ENCODE measurements at regions of chr12 and their contacts with region 1.

Region 1: DNA sequence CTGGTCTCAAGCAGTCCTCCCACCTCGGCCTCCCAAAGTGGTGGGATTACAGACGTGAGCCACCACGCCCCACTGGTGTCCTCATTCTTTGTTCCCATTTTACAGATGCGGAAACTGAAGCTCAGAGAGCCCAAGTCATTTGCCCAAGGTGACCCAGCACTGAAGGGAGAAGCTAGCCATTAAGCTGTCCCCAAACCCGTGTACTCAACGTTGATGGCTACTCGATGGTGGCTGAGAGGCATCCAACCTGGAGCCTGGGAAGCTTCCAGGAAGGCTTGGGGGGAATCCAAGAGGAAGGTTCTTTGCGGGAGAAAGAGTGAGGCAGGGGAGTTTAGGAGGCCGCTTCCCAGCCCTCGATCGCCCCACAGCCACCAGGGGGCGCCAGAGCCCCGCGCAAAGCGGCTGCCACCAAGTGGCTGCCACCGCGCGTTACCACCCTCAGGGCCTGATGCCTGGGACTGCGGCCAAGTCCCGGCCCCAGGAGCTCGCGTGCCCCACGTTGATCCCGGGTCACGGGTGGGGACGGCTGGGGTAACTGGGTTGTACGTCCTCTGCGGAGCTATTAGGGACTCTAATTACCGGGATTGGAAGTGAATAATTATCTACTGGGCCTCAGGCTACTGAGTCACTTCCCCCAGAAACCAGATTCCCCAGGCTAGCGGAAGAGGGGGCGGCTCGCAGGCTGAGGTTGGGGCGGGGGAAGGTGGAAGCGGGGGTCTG is 8.8 kb upstream of the SH2B3 start:
- DNase-seq: peak; percentile 76 to 95 (median 86)
- ATAC-seq: peak; percentile 86
- H3K4me3 ChIP-seq: no peak overlapping the region
- H3K4me3 Mint-ChIP-seq: peak overlapping the region in 7 of 10 donors; percentile 32 to 67 (median 53)
- H3K27ac ChIP-seq: no peak overlapping the region
- H3K27ac Mint-ChIP-seq: peak overlapping the region in 6 of 9 donors; percentile 10 to 67 (median 43)
- H3K4me1 ChIP-seq: peaks cover 0 to 3% of the 10 kb centered on the region in 2 donors
- H3K4me1 Mint-ChIP-seq: peaks cover 0 to 26% (median 10%) of the 10 kb centered on the region in 7 donors
- H3K27me3 ChIP-seq: no peaks in the 10 kb centered on the region
- H3K27me3 Mint-ChIP-seq: no peaks in the 10 kb centered on the region

Region 2: DNA sequence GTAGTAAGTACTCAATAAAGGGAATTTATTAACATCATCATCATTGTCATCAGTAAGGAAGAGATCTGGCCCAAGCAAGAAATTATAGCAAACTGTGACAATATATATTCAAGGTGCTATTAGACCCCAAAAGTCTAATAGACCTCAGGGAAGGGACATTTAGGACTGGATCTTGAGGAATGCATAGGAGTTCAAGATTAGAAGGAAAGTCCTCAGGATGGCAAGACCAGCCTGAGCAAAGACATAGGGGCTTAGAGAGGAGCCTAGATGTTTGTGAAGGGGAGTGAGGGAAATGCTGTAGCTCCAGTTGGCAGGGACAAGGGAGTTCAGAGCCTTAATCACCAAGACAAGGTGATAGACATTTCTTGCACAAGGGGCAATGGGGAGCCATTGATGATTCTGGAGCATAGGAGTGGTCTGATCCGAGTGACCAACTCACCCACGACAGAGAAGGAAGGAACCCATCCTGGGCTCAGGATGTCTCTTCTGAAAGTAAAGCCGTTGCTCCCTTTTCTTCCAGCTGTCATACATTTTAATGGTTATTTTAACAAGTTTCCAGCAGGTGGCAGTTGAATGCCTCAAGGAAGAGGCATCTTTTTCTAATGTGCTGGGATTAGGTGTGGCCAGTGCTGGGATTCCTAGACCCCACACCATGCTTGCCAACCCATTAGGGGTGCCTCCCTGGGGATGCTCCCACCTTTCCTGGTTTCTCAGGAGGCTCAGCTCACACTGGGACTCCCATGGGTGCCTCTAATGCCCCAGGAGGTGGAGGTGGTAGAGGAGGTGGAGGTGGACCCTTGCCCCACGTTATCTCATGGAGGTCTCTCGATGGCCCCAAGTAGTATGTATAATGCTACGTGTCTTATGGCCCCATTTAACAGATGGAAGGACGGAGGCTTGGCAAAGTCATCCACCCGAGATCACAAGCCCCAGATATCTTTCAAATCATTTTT is 65.8 kb before region 1 on chr12:
- CTCF ChIA-PET with region 1: no interaction called
- POLR2A ChIA-PET with region 1: no interaction called
- intact Hi-C with region 1: loop called in 1 of 2 experiments (anchors 1 kb)
- DNase-seq: no peak
- ATAC-seq: peak; percentile 37
- H3K4me3 ChIP-seq: no peak overlapping the region
- H3K4me3 Mint-ChIP-seq: no peak overlapping the region
- H3K27ac ChIP-seq: no peak overlapping the region
- H3K27ac Mint-ChIP-seq: no peak overlapping the region
- H3K4me1 ChIP-seq: no peaks in the 10 kb centered on the region
- H3K4me1 Mint-ChIP-seq: peaks cover 0 to 10% (median 4%) of the 10 kb centered on the region in 7 donors
- H3K27me3 ChIP-seq: no peaks in the 10 kb centered on the region
- H3K27me3 Mint-ChIP-seq: peaks cover 0 to 5% (median 2%) of the 10 kb centered on the region in 5 donors

Region 3: DNA sequence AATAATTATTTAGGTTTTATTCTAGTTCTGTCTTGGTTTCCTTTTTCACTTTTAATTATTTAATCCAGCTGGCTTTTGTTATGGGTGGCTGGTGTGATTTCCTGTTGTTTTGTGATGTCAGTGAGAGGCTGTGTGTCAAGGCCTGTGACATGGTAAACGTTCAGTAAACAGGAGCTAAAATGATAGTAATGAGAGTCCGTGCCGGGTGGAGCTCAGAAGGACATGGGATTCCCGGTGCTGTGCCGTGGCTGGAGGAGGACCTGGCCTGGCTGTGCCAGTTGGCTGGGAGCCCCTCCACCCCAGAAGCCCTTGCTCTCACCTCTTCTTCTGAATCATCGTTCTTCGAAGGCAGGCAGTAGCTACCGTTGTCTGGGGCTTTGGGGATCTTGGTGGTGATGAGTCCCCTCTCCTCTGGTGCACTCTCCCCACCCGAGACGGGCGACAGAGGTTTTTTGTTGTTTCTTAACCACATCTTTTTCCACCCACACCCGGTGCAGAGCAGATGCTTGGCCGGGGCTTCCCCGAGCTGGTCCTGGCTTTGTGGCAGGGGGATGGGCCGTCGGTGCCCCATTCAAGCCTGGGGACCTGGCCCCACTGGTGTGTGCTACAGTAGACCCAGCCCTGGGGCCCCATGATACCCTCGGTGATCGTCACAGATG is 37.9 kb after region 1 on chr12:
- CTCF ChIA-PET with region 1: interaction called, 14 read pairs
- POLR2A ChIA-PET with region 1: interaction called, 5 read pairs
- intact Hi-C with region 1: no loop called
- DNase-seq: peak; percentile 62 to 94 (median 83)
- ATAC-seq: peak; percentile 83
- H3K4me3 ChIP-seq: peak overlapping the region; percentile 56
- H3K4me3 Mint-ChIP-seq: peak overlapping the region; percentile 68 to 88 (median 85)
- H3K27ac ChIP-seq: peak overlapping the region; percentile 94
- H3K27ac Mint-ChIP-seq: peak overlapping the region; percentile 97 to 99 (median 99)
- H3K4me1 ChIP-seq: peaks cover 84% of the 10 kb centered on the region in 2 donors
- H3K4me1 Mint-ChIP-seq: peaks cover 79 to 96% (median 91%) of the 10 kb centered on the region in 7 donors
- H3K27me3 ChIP-seq: no peaks in the 10 kb centered on the region
- H3K27me3 Mint-ChIP-seq: no peaks in the 10 kb centered on the region

Region 4: GRCh38 chr12:111482462-111482861 is 85.6 kb after region 1 on chr12:
- CTCF ChIA-PET with region 1: interaction called, 14 read pairs
- POLR2A ChIA-PET with region 1: interaction called, 9 read pairs
- intact Hi-C with region 1: loop called (anchors 1 kb)
- DNase-seq: peak in 2 of 9 donors; percentile 4 to 15
- ATAC-seq: no peak
- H3K4me3 ChIP-seq: no peak overlapping the region
- H3K4me3 Mint-ChIP-seq: no peak overlapping the region
- H3K27ac ChIP-seq: no peak overlapping the region
- H3K27ac Mint-ChIP-seq: peak overlapping the region in 1 of 9 donors; percentile 70
- H3K4me1 ChIP-seq: no peaks in the 10 kb centered on the region
- H3K4me1 Mint-ChIP-seq: no peaks in the 10 kb centered on the region
- H3K27me3 ChIP-seq: no peaks in the 10 kb centered on the region
- H3K27me3 Mint-ChIP-seq: no peaks in the 10 kb centered on the region

Region 5: GRCh38 chr12:111673503-111673902 is 276.6 kb after region 1 on chr12:
- CTCF ChIA-PET with region 1: interaction called, 4 read pairs
- POLR2A ChIA-PET with region 1: no interaction called
- intact Hi-C with region 1: loop called in 1 of 2 experiments (anchors 1 kb)
- DNase-seq: no peak
- ATAC-seq: no peak
- H3K4me3 ChIP-seq: no peak overlapping the region
- H3K4me3 Mint-ChIP-seq: no peak overlapping the region
- H3K27ac ChIP-seq: no peak overlapping the region
- H3K27ac Mint-ChIP-seq: no peak overlapping the region
- H3K4me1 ChIP-seq: no peaks in the 10 kb centered on the region
- H3K4me1 Mint-ChIP-seq: peaks cover 0 to 3% (median 0%) of the 10 kb centered on the region in 7 donors
- H3K27me3 ChIP-seq: no peaks in the 10 kb centered on the region
- H3K27me3 Mint-ChIP-seq: no peaks in the 10 kb centered on the region

Measured in naive thymus-derived CD4-positive, alpha-beta T cell (primary cell).